PC-9 (cell line): ENCODE measurements at regions of chr11 and their contacts with region 1.

Region 1: GRCh38 chr11:48063424-48063978 is 83.1 kb downstream of the PTPRJ start:
- DNase-seq: peak; percentile 62 to 98
- H3K4me3 ChIP-seq: peak overlapping the region; percentile 27; the same call in 1 of the 2 replicates
- H3K27ac ChIP-seq: peak overlapping the region; percentile 95
- H3K4me1 ChIP-seq: peaks cover 73% of the 10 kb centered on the region
- H3K27me3 ChIP-seq: no peaks in the 10 kb centered on the region
- CTCF ChIP-seq: no peak

Region 2: DNA sequence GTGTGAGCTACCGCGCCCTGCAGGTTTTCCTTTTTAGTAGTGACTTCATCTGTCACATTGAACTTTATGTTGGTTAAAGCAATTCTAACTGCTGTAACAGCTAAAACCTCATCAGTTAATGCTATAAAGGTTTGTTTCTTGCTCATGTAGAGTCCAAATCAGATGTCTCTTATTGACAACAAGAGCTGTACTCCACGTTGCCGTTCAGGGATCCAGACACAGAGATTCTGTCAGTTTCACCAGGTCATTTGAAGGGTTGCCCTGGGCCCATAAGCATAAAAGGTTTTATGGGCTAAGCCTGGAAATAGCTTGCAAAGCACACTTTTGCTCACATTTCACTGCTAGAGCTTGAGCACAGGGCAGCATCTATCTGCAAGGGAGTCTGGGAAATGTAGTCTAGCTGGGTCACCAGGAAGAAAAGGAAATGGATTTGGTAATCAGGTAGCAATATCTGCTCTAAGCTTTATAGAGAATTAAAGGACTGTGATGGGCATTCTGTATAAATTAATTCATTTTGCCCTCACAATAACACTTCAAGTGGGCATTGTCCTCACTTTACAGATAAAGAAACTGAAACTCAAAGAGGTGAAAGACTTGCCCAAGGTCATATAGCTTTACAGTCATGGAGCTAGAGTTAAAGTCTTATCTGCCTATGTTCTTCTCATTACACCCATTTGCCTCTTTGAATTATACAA is 108.3 kb before region 1 on chr11:
- CTCF ChIA-PET with region 1: no interaction called
- POLR2A ChIA-PET with region 1: no interaction called
- intact Hi-C with region 1: no loop called
- DNase-seq: no peak
- H3K4me3 ChIP-seq: no peak overlapping the region
- H3K27ac ChIP-seq: no peak overlapping the region
- H3K4me1 ChIP-seq: no peaks in the 10 kb centered on the region
- H3K27me3 ChIP-seq: no peaks in the 10 kb centered on the region
- CTCF ChIP-seq: no peak

Region 3: DNA sequence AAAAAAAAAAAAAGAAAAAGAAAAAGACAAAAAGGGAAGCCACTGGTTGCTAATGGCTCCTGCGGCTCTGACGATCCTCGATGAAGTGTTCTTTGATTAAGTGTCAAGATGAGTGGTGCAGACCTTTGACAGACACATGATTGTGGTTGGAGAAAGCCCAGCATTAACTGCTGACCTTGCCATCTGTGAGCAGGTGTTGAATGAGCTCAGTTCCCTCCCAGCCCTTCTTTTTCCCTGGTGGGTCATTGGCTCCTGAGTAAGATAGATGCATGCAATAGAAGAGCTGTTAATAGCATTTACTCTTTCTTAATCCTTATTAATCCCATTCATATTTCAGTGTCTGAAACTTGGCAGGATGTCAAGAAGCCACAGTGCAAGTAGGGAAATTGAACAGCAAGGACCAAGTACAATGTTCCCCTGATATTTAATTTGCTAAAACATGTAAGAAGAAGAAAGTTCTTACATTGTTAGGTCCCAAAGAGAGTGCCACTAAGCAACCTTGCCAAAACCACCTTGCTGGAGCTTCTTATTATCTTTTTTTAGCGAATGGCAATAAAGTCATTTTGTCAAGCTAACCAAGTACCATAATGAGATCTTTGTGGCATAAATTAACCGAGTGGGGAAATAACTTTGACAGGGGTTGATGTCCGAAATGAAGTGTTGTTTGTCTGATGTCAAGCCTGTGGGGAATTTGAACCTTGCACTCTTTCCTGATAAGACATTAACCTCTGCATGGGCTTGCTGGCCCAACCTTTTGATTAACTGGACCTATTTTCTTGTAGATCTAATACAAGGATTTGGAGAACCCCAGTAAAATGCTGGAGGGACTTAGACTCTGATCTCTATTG is 30.5 kb after region 1 on chr11:
- CTCF ChIA-PET with region 1: interaction called, 4 read pairs
- POLR2A ChIA-PET with region 1: interaction called, 11 read pairs
- intact Hi-C with region 1: loop called (anchors 1 kb)
- DNase-seq: no peak
- H3K4me3 ChIP-seq: no peak overlapping the region
- H3K27ac ChIP-seq: no peak overlapping the region
- H3K4me1 ChIP-seq: peaks cover 45% of the 10 kb centered on the region
- H3K27me3 ChIP-seq: no peaks in the 10 kb centered on the region
- CTCF ChIP-seq: no peak